ENCODE measurements at regions of chr6 and their contacts with region 1.

Region 1: GRCh38 chr6:42142118-42142931 is at the start of gene C6orf132:
- DNase-seq: peak; percentile 63
- H3K4me3 Mint-ChIP-seq: peak within 1 kb of the TSS; percentile 66
- H3K27ac Mint-ChIP-seq: peak within 1 kb of the TSS; percentile 55
- H3K4me1 Mint-ChIP-seq: peaks cover 22% of the 10 kb centered on the region
- H3K27me3 Mint-ChIP-seq: no peaks in the 10 kb centered on the region
- CTCF ChIP-seq: no peak
- total RNA-seq, gene C6orf132: 19.5 and 31.9 TPM in 2 replicates

Region 2: GRCh38 chr6:42050266-42051032 is 91.9 kb before region 1 on chr6 and contains the start of gene TAF8:
- CTCF ChIA-PET with region 1: no interaction called
- POLR2A ChIA-PET with region 1: interaction called, 45 read pairs
- intact Hi-C with region 1: no loop called
- DNase-seq: peak; percentile 93
- H3K4me3 Mint-ChIP-seq: peak within 1 kb of the TSS; percentile 91
- H3K27ac Mint-ChIP-seq: peak within 1 kb of the TSS; percentile 94
- H3K4me1 Mint-ChIP-seq: peaks cover 22% of the 10 kb centered on the region
- H3K27me3 Mint-ChIP-seq: no peaks in the 10 kb centered on the region
- CTCF ChIP-seq: no peak
- total RNA-seq, gene TAF8: 23.8 and 25.8 TPM in 2 replicates

Region 3: DNA sequence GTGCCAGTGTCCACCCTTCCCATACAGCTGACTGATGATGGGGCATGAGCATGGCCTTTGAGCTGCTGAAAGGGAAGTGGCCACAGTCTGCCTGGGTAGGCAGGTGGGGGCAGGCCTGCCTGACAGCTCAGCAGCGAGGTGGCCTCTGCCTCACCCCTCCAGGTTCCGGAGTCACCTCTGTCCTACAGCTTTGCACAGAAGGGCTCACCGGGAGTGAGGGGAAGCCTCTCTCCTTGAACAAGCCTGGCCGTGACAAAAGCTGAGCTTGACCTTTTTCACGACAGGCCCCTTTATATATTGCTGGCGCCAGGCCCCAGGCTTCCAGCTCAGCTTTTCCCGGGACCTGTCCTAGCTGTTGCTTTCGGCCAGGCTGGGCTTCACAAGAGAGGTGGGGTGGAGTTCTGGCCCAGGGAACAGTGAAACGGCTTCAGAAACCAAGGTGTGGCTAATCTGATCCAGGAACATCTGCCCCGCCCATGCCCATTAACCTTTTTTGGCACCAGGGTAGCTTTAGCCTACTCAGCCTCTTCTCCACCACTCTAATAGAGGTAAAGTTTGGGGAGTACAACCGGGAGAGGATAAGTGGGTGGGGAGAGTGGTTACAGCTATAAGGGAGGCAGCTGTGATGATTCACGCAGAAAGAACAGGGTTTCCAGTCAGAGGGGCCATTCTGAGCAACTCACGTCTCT is 42.8 kb before region 1 on chr6:
- CTCF ChIA-PET with region 1: interaction called, 6 read pairs
- POLR2A ChIA-PET with region 1: interaction called, 60 read pairs
- intact Hi-C with region 1: loop called (anchors 2 kb)
- DNase-seq: peak; percentile 97
- H3K4me3 Mint-ChIP-seq: peak overlapping the region; percentile 15
- H3K27ac Mint-ChIP-seq: peak overlapping the region; percentile 46
- H3K4me1 Mint-ChIP-seq: peaks cover 30% of the 10 kb centered on the region
- H3K27me3 Mint-ChIP-seq: no peaks in the 10 kb centered on the region
- CTCF ChIP-seq: no peak

Region 4: GRCh38 chr6:42118162-42119001 is 23.9 kb before region 1 on chr6:
- CTCF ChIA-PET with region 1: interaction called, 6 read pairs
- POLR2A ChIA-PET with region 1: interaction called, 32 read pairs
- intact Hi-C with region 1: loop called (anchors 2 kb)
- DNase-seq: peak; percentile 89
- H3K4me3 Mint-ChIP-seq: no peak overlapping the region
- H3K27ac Mint-ChIP-seq: peak overlapping the region; percentile 63
- H3K4me1 Mint-ChIP-seq: peaks cover 26% of the 10 kb centered on the region
- H3K27me3 Mint-ChIP-seq: no peaks in the 10 kb centered on the region
- CTCF ChIP-seq: no peak

Region 5: DNA sequence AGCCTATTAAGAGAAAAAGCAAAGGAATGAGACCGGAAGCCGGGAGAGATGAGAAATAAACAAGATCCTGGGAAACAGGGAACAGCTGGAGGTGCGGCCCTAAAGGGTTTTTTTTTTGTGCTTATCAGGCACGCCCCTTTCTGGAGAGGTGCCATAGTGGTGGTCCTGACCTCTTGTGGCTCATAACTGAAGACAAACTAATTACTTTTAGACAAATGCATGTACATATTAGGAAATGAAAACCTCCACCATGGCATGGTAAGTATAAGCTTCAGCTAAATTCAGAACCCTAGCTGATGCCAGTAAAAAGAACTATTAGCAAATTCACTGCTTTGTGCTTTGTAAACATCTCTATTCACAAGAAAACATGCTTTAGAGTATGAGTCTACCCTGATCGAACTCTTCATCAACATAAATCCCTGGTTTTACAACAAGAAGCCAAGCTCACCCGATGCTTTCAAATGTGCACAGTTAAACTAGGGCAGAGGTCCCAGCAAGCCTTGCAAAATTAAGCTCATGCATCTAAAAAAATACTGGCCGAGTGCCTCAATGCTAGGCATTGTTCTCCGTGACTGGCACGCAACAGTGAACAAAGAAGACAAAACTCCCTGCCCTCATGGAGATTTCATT is 171.7 kb after region 1 on chr6:
- CTCF ChIA-PET with region 1: no interaction called
- POLR2A ChIA-PET with region 1: no interaction called
- intact Hi-C with region 1: no loop called
- DNase-seq: no peak
- H3K4me3 Mint-ChIP-seq: peak overlapping the region; percentile 7
- H3K27ac Mint-ChIP-seq: peak overlapping the region; percentile 29
- H3K4me1 Mint-ChIP-seq: peaks cover 46% of the 10 kb centered on the region
- H3K27me3 Mint-ChIP-seq: no peaks in the 10 kb centered on the region
- CTCF ChIP-seq: no peak

Measured in MCF 10A (cell line).